Activated CD4-positive, alpha-beta T cell treated with anti-CD3 and anti-CD28 coated beads, Interleukin-2, amount 10 ng/mL, durations not matched to agents 24 days and 14 days (primary cell): ENCODE measurements at regions of chr17 and their contacts with region 1.

Region 1: GRCh38 chr17:46832945-46833839 is 14.7 kb upstream of the WNT3 start:
- DNase-seq: no peak
- H3K4me3 Mint-ChIP-seq: no peak overlapping the region
- H3K27ac Mint-ChIP-seq: no peak overlapping the region
- H3K4me1 Mint-ChIP-seq: peaks cover 3% of the 10 kb centered on the region
- H3K27me3 Mint-ChIP-seq: peaks cover 13% of the 10 kb centered on the region

Region 2: DNA sequence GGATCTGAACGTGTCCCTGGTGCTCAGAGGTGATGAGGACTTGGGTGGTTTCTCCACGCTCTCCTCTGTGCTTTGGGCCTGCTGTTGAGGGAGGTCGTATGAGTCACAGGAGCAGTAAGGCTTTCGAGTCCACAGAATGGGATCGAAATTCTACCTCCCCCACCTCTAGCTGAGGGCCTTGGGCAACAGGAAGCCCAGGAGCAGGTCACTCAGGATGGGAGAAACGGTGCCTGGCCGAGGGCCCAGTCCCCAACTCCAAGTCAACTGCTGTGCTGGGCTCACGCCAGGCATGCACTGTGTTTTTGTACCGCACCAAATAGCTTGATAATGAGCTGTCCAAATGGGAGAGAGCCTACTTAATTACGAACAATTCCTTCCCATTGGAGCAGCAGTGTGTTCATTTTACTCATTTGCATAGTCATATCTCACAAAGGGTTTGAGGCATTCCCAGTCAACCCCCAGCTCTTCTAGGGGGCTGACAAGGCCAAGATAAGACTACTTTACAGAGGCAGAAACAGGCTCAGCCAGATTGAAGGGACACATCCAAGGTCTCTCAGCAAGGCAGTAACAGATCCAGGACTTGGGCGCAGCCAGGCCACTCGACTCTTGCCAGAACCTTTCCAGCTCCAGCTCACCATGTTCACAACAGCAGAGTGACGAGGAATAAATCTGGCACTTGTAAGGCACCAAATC is 68.3 kb before region 1 on chr17:
- intact Hi-C with region 1: loop called (anchors 10 kb)
- DNase-seq: no peak
- H3K4me3 Mint-ChIP-seq: no peak overlapping the region
- H3K27ac Mint-ChIP-seq: no peak overlapping the region
- H3K4me1 Mint-ChIP-seq: no peaks in the 10 kb centered on the region
- H3K27me3 Mint-ChIP-seq: peaks cover 18% of the 10 kb centered on the region